H1 (cell line): ENCODE measurements at regions of chrX and their contacts with region 1.

Region 1: GRCh38 chrX:20066968-20067708 is 49.6 kb downstream of the MAP7D2 start:
- DNase-seq: no peak
- H3K4me3 ChIP-seq: no peak overlapping the region
- H3K27ac ChIP-seq: peak overlapping the region; percentile 20; the same call in 1 of the 2 replicates
- H3K4me1 ChIP-seq: peaks cover 0 to 2% (median 0%) of the 10 kb centered on the region in 4 experiments; a peak in 2 of 7 replicates
- H3K27me3 ChIP-seq: no peaks in the 10 kb centered on the region
- CTCF ChIP-seq: peak in 2 of 3 experiments; percentile 32 to 53; a peak in 2 of 4 replicates
- EP300 ChIP-seq: no peak
- POLR2A ChIP-seq: no peak
- RAD21 ChIP-seq: peak; percentile 74

Region 2: GRCh38 chrX:19904778-19905367 is 162.3 kb before region 1 on chrX:
- CTCF ChIA-PET with region 1: interaction called, 16 read pairs
- POLR2A ChIA-PET with region 1: interaction called, 3 read pairs
- DNase-seq: no peak
- H3K4me3 ChIP-seq: no peak overlapping the region
- H3K27ac ChIP-seq: no peak overlapping the region
- H3K4me1 ChIP-seq: no peaks in the 10 kb centered on the region; a peak in 1 of 7 replicates
- H3K27me3 ChIP-seq: no peaks in the 10 kb centered on the region
- CTCF ChIP-seq: peak in 2 of 3 experiments; percentile 57 to 58; a peak in 3 of 4 replicates
- EP300 ChIP-seq: peak in 1 of 2 experiments; percentile 37; a peak in 1 of 3 replicates
- POLR2A ChIP-seq: no peak
- RAD21 ChIP-seq: peak; percentile 78 to 83

Region 3: DNA sequence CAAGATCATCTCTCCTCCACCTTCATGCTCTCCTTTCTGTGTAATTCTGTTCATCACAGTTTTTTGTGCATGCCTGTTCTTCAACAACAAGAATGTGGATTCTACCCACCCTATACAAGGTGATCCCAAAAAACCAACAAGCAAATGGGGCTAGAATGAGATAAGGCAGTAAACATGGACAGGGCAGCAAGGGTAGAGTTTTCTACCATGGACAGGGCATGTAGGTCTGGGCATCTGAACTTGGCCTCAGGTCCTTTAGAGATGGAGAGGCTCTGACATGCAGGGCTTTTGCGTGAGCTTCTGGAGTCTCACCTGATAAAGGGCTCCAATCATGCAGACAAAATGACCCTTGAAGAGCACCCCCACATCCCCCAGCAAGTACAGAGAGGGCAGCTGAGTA is 13.1 kb after region 1 on chrX:
- CTCF ChIA-PET with region 1: interaction called, 10 read pairs
- POLR2A ChIA-PET with region 1: no interaction called
- DNase-seq: no peak
- H3K4me3 ChIP-seq: no peak overlapping the region
- H3K27ac ChIP-seq: no peak overlapping the region
- H3K4me1 ChIP-seq: no peaks in the 10 kb centered on the region
- H3K27me3 ChIP-seq: no peaks in the 10 kb centered on the region
- CTCF ChIP-seq: no peak
- EP300 ChIP-seq: no peak
- POLR2A ChIP-seq: no peak
- RAD21 ChIP-seq: no peak